ENCODE measurements at regions of chr17 and their contacts with region 1.

Region 1: DNA sequence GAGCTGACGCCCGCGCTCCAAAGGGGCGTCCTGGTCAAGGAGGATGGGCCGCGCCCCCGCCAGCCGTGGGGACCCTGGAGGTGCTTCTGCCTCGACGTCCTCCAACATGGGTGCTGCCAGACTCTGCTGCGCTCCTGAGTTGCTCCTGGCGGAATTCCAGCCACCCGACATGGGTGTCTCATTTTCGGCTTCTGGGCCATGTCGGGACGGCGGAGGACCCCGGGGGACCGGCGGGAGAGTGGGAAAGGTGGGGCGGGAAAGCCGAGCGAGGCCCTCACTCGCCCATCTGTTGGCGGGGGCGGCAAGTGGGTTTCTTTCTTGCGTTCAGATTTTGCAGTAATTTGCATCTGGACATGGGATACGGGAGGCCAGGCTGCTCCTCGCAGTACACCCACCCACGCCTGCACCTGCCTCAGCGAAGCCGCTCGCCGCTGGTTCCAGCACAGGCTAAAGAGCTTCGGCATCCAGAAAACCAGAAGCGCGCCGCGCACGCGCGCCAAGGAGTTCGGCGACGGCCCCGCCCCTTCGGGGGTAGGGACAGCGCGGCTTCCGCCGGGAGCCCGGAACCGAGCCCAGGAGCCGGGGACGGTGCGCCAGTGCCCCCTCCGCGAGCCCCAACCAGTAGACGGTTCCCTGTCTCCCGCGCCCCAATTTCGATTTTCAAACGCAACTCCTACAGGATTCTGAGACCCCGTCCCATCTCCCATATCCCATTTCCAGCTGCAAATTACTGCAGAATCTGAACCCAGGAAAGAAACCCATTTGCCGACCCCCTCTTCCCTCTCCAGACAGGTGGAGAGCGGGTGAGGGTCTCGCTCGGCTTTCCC is at the start of gene ARMC7:
- DNase-seq: peak; percentile 85 to 97
- ATAC-seq: peak; percentile 78 to 80
- H3K4me3 ChIP-seq: peak within 1 kb of the TSS; percentile 77
- H3K27ac ChIP-seq: peak within 1 kb of the TSS; percentile 91 to 94
- H3K4me1 ChIP-seq: peaks cover 22% of the 10 kb centered on the region
- CTCF ChIP-seq: peak; percentile 18; the same call in 1 of the 3 replicates
- EP300 ChIP-seq: no peak
- POLR2A ChIP-seq: peak; percentile 83
- RAD21 ChIP-seq: peak; percentile 32 to 46
- polyA plus RNA-seq, gene ARMC7: 8.5 and 9.5 TPM in 2 replicates

Region 2: DNA sequence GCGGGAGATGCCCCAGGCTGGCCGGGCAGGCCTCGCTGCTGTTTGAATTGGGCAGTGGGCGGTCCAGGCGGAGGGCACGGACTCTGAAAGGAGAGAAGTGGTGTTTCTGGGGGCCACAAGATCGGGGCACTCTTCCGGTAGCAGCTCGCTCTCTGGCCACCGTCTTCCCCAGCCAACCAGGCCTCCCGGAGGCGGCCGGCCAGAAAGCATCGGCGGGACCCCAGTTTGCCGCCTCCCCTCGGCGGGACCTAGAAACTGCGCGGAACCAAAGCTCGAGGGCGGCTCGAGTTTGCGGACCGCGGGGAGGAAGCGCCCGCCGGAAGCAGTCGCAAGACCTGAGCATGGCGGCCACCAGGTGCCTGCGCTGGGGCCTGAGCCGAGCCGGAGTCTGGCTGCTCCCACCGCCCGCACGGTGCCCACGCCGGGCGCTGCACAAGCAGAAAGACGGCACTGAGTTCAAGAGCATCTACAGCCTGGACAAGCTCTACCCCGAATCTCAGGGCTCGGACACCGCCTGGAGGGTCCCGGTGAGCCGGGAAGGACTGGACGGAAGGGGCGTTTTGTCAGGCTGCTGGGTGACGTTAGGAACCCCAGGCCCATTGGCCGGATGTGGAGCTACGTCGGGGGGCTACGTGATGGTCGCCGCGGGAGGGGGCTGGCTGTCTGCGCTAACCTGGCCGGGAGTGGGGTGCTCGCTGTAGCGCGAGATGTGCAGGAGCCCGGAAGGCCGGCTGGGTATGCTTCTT is 97.1 kb before region 1 on chr17 and contains the start of gene MRPL58:
- CTCF ChIA-PET with region 1: interaction called, 12 read pairs
- POLR2A ChIA-PET with region 1: interaction called, 3 read pairs
- DNase-seq: peak; percentile 94 to 95
- ATAC-seq: peak; percentile 92 to 96
- H3K4me3 ChIP-seq: peak within 1 kb of the TSS; percentile 76
- H3K27ac ChIP-seq: peak within 1 kb of the TSS; percentile 85 to 92
- H3K4me1 ChIP-seq: peaks cover 18% of the 10 kb centered on the region
- CTCF ChIP-seq: peak; percentile 36; the same call in 2 of the 3 replicates
- EP300 ChIP-seq: no peak
- POLR2A ChIP-seq: peak; percentile 79
- RAD21 ChIP-seq: peak; percentile 37 to 48; a peak in 4 of 5 replicates
- polyA plus RNA-seq, gene MRPL58: 86.4 and 127 TPM in 2 replicates

Region 3: GRCh38 chr17:75024686-75025397 is 84.8 kb before region 1 on chr17:
- CTCF ChIA-PET with region 1: no interaction called
- POLR2A ChIA-PET with region 1: no interaction called
- DNase-seq: no peak
- ATAC-seq: peak in 1 of 2 experiments; percentile 67; a peak in 3 of 6 replicates
- H3K4me3 ChIP-seq: no peak overlapping the region
- H3K27ac ChIP-seq: no peak overlapping the region
- H3K4me1 ChIP-seq: no peaks in the 10 kb centered on the region
- CTCF ChIP-seq: no peak
- EP300 ChIP-seq: no peak
- POLR2A ChIP-seq: no peak
- RAD21 ChIP-seq: no peak

Region 4: GRCh38 chr17:75096082-75096625 is 13.5 kb before region 1 on chr17:
- CTCF ChIA-PET with region 1: interaction called, 3,429 read pairs
- POLR2A ChIA-PET with region 1: interaction called, 10 read pairs
- DNase-seq: peak; percentile 90 to 99
- ATAC-seq: peak; percentile 85 to 87
- H3K4me3 ChIP-seq: no peak overlapping the region
- H3K27ac ChIP-seq: peak overlapping the region; percentile 71 to 96
- H3K4me1 ChIP-seq: peaks cover 60% of the 10 kb centered on the region
- CTCF ChIP-seq: no peak
- EP300 ChIP-seq: peak in 1 of 2 experiments; percentile 79; a peak in 2 of 5 replicates
- POLR2A ChIP-seq: no peak
- RAD21 ChIP-seq: peak; percentile 28 to 40; a peak in 3 of 5 replicates

Region 5: GRCh38 chr17:75154195-75155106 is 44.8 kb after region 1 on chr17 and contains the start of gene JPT1:
- CTCF ChIA-PET with region 1: interaction called, 3,429 read pairs
- POLR2A ChIA-PET with region 1: interaction called, 9 read pairs
- DNase-seq: peak; percentile 99 to 100
- ATAC-seq: peak; percentile 85 to 94
- H3K4me3 ChIP-seq: peak within 1 kb of the TSS; percentile 78
- H3K27ac ChIP-seq: peak within 1 kb of the TSS; percentile 85 to 95
- H3K4me1 ChIP-seq: peaks cover 54% of the 10 kb centered on the region
- CTCF ChIP-seq: no peak
- EP300 ChIP-seq: no peak
- POLR2A ChIP-seq: peak; percentile 100
- RAD21 ChIP-seq: no peak
- polyA plus RNA-seq, gene JPT1: 141 and 196 TPM in 2 replicates

Region 6: DNA sequence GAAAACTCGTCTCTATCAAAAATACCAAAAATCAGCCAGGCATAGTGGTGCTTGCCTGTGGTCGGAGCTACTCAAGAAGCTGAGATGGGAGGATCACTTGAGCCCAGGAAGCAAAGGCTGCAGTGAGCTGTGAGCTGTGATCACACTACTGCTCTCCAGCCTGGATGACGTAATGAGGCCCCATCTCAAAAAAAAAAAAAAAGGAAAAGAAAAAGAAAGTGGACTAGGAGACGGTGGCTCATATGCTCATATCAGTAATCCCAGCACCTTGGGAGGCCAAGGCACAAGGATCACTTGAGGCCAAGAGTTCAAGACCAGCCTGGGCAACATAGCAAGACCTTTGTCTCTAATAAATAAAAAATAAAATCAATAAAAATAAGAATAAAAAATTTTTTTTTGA is 82.0 kb after region 1 on chr17:
- CTCF ChIA-PET with region 1: interaction called, 543 read pairs
- POLR2A ChIA-PET with region 1: no interaction called
- DNase-seq: no peak
- ATAC-seq: no peak
- H3K4me3 ChIP-seq: no peak overlapping the region
- H3K27ac ChIP-seq: no peak overlapping the region
- H3K4me1 ChIP-seq: peaks cover 7% of the 10 kb centered on the region; the same call in 1 of the 3 replicates
- CTCF ChIP-seq: no peak
- EP300 ChIP-seq: no peak
- POLR2A ChIP-seq: no peak
- RAD21 ChIP-seq: no peak

Region 7: GRCh38 chr17:75228305-75228704 is 118.7 kb after region 1 on chr17:
- CTCF ChIA-PET with region 1: interaction called, 13 read pairs
- POLR2A ChIA-PET with region 1: no interaction called
- DNase-seq: no peak
- ATAC-seq: no peak
- H3K4me3 ChIP-seq: no peak overlapping the region
- H3K27ac ChIP-seq: no peak overlapping the region
- H3K4me1 ChIP-seq: no peaks in the 10 kb centered on the region
- CTCF ChIP-seq: no peak
- EP300 ChIP-seq: no peak
- POLR2A ChIP-seq: no peak
- RAD21 ChIP-seq: no peak

Measured in A549 (cell line).